Ascending aorta (tissue), 2 donors: ENCODE measurements at regions of chr2 and their contacts with region 1.

Region 1: GRCh38 chr2:39913648-39914461 is 134.8 kb upstream of the THUMPD2 start:
- DNase-seq: no peak
- H3K4me3 ChIP-seq: no peak overlapping the region
- H3K27ac ChIP-seq: no peak overlapping the region
- H3K4me1 ChIP-seq: no peaks in the 10 kb centered on the region
- H3K27me3 ChIP-seq: no peaks in the 10 kb centered on the region
- CTCF ChIP-seq: peak; percentile 61 to 83 (median 82)

Region 2: DNA sequence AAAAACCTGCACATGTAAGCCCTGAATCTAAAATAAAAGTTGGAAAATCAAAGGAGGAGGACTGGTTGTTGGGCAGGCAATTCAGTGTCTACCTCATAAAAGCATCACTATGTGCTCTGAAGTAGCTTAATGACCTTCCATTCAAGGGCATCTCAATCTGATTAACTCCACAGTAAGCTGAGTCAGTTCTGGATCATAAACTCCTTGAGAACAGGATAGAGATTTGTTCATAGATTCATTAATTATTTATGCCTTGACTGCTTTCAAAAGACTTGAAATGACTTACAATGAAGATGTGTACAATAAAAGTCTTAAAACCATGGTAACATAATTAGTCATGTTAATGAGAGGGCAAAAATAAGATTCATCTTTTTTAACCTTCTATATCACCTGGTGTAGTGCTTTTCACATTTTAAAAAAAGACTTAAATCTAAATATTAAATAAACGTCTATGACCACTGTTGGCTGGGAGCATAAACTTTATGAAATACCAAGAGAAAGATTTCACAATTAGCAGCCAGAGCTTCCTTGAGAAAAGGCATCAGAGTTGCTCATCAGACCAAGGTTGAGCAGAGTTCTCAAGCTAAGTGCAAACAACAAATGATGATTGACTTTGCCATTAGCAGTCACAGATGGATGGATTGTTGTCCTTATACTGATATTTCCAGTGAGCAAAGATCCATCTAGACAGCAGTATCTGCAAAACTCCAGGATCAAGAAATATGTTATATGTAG is 102.5 kb after region 1 on chr2:
- intact Hi-C with region 1: no loop called
- DNase-seq: no peak
- H3K4me3 ChIP-seq: no peak overlapping the region
- H3K27ac ChIP-seq: no peak overlapping the region
- H3K4me1 ChIP-seq: no peaks in the 10 kb centered on the region
- H3K27me3 ChIP-seq: no peaks in the 10 kb centered on the region
- CTCF ChIP-seq: no peak

Region 3: GRCh38 chr2:40554668-40555285 is 640.9 kb after region 1 on chr2:
- intact Hi-C with region 1: loop called (anchors 2 kb)
- DNase-seq: peak in 1 of 2 donors; percentile 76
- H3K4me3 ChIP-seq: no peak overlapping the region
- H3K27ac ChIP-seq: no peak overlapping the region
- H3K4me1 ChIP-seq: no peaks in the 10 kb centered on the region
- H3K27me3 ChIP-seq: no peaks in the 10 kb centered on the region
- CTCF ChIP-seq: peak; percentile 69 to 86 (median 78)

Region 4: GRCh38 chr2:41698678-41699422 is 1785.0 kb after region 1 on chr2:
- intact Hi-C with region 1: loop called (anchors 5 kb)
- DNase-seq: no peak
- H3K4me3 ChIP-seq: peak overlapping the region; percentile 44 to 46
- H3K27ac ChIP-seq: no peak overlapping the region
- H3K4me1 ChIP-seq: no peaks in the 10 kb centered on the region
- H3K27me3 ChIP-seq: no peaks in the 10 kb centered on the region
- CTCF ChIP-seq: peak; percentile 70 to 94 (median 86)

Region 5: GRCh38 chr2:41782306-41783158 is 1868.7 kb after region 1 on chr2:
- intact Hi-C with region 1: loop called (anchors 1 kb)
- DNase-seq: no peak
- H3K4me3 ChIP-seq: no peak overlapping the region
- H3K27ac ChIP-seq: no peak overlapping the region
- H3K4me1 ChIP-seq: peaks cover 0 to 8% of the 10 kb centered on the region in 2 donors
- H3K27me3 ChIP-seq: no peaks in the 10 kb centered on the region
- CTCF ChIP-seq: peak; percentile 69 to 87 (median 76)